ENCODE measurements at regions of chr22 and their contacts with region 1.

Region 1: DNA sequence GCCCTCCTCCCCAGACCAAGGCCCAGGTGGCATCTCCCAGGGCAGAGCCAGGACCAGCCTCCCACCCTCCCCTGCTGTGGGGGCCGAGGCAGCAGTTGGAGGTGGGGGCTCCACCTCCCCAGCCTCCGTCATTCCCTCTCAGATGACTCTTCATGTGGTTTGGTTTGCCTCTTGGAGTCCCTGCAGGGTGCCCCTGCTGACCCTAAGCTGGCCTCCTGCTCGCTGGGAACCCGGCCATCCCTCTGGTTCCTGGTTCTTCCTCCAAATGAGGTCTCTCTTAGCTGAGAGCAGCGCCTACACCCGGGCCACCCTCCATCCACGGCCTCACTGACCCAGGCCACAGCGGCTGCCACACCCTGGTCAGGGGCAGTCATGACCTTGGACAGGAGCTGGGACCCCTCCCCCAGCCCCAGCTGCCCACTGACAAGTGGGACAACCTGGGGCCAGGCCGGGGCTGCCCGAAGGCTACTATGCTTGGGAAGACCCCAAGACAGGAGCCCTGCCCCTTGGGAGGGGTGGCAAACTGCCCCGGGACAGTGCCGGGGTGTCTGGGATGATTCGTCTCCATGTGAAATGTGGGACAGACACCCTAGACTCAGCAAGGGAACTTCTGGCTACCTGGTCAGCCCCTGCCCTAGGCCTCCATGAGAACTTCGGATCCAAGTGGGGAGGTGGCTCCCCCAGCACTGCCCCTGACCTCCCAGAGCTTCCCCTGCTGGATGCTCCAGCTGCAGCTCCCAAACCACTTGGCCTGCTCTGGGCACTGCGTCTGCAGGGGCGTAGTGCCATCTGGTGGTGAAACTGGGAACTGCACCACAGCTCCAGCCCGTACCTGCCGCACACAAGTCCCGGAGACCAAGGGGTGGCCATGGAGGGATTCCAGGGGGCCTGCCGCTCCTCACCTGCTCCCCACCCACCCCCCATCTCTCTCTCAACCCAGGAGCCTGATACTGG is 194.5 kb downstream of the IGLL1 start:
- DNase-seq: peak; percentile 80
- ATAC-seq: peak; percentile 94
- H3K4me3 ChIP-seq: no peak overlapping the region
- H3K27ac ChIP-seq: no peak overlapping the region
- H3K4me1 ChIP-seq: no peaks in the 10 kb centered on the region
- H3K27me3 ChIP-seq: no peaks in the 10 kb centered on the region
- CTCF ChIP-seq: peak; percentile 82

Region 2: GRCh38 chr22:23322547-23322946 is 63.0 kb before region 1 on chr22:
- CTCF ChIA-PET with region 1: no interaction called
- POLR2A ChIA-PET with region 1: no interaction called
- intact Hi-C with region 1: loop called (anchors 10 kb)
- DNase-seq: no peak
- ATAC-seq: no peak
- H3K4me3 ChIP-seq: no peak overlapping the region
- H3K27ac ChIP-seq: no peak overlapping the region
- H3K4me1 ChIP-seq: no peaks in the 10 kb centered on the region
- H3K27me3 ChIP-seq: no peaks in the 10 kb centered on the region
- CTCF ChIP-seq: no peak

Measured in PC-3 (cell line).